Aorta (tissue), 5 donors: ENCODE measurements at regions of chr7 and their contacts with region 1.

Region 1: GRCh38 chr7:24836084-24836483 is 78.8 kb upstream of the GSDME start:
- DNase-seq: no peak
- ATAC-seq: no peak
- H3K4me3 ChIP-seq: no peak overlapping the region
- H3K27ac ChIP-seq: no peak overlapping the region
- H3K4me1 ChIP-seq: no peaks in the 10 kb centered on the region
- H3K27me3 ChIP-seq: no peaks in the 10 kb centered on the region

Region 2: DNA sequence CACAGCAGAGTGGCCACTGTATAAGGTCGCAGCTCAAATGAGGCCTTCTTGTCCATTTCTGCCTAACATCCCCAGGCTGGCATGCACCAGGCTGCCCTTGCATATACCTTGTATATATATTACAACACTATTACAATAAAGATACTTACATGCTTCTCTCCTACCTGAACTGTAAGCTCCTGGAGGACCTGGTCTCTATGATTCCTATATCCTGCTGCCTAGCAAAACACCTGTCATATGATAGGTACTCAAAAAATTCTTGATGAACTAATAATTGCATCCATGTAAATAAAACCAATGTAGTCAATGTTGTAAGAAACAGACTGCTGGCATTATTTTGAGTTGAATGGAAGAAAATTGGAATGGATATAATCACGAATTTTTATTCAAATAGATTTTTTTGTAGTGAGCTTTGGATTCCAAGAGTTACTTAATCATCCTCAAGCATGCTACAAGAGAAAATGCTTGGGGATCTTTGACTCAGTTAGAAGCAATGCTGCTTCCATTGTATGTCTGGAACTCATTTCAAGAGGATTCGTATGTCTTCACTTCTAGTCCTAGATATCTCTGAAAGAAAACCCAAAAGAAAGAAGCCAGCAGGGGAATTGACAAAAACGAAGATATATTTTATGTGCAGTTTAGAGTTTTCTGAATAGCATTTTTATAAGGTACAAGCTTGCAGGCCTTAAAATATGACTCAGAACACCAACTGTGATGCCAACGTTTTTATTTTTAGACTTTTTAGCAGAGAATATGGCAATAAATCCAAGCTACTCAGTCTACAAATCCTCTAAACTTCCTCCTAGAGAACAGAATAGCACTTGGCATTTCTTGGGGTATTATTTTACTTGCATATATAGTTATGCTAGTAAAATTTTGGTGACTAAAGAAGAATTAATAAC is 90.8 kb after region 1 on chr7:
- intact Hi-C with region 1: loop called in 1 of 2 experiments (anchors 10 kb)
- DNase-seq: no peak
- ATAC-seq: no peak
- H3K4me3 ChIP-seq: no peak overlapping the region
- H3K27ac ChIP-seq: peak overlapping the region in 1 of 2 donors; percentile 36
- H3K4me1 ChIP-seq: peaks cover 4 to 5% of the 10 kb centered on the region in 2 donors
- H3K27me3 ChIP-seq: no peaks in the 10 kb centered on the region

Region 3: DNA sequence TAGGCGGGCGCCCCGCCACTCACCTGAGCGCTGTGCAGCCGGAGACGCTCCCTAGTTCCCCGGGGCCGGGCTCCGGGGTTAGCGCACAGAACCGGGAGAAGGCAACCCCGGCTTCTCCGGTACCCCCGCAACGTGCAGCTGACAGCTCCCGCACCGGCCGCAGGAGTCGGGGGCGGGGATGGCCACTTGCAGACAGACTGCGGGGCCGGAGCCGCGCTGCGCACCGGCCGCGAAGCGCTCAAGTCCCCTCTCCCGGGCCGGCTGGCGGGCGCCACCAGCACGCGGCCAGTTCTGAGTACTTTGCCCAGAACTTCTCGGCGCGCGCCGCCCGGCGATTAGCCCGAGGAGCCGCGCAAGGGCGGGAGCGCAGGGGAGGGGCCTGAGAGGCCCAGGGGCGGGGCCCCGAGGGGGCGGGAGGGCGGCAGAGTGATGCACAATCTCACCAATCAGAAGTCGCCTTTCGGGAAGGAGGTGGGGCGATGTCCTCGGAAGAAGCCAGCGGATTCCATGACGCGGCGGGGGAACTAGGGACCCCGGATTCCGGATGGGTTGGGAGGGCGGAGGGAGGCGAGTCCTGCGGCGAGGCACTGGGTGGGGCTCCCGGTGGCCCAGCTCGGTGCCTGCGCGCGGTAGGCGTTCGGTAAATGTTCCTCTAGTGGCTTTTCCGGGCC is 143.9 kb after region 1 on chr7 and contains the start of gene OSBPL3:
- intact Hi-C with region 1: loop called in 1 of 2 experiments (anchors 5 kb)
- DNase-seq: peak; percentile 97
- ATAC-seq: peak; percentile 98
- H3K4me3 ChIP-seq: peak within 1 kb of the TSS; percentile 83 to 90
- H3K27ac ChIP-seq: peak within 1 kb of the TSS in 1 of 2 donors; percentile 65
- H3K4me1 ChIP-seq: no peaks in the 10 kb centered on the region
- H3K27me3 ChIP-seq: no peaks in the 10 kb centered on the region
- total RNA-seq, gene OSBPL3: 8.3 to 15.6 TPM